ENCODE measurements at regions of chr6 and their contacts with region 1.

Region 1: DNA sequence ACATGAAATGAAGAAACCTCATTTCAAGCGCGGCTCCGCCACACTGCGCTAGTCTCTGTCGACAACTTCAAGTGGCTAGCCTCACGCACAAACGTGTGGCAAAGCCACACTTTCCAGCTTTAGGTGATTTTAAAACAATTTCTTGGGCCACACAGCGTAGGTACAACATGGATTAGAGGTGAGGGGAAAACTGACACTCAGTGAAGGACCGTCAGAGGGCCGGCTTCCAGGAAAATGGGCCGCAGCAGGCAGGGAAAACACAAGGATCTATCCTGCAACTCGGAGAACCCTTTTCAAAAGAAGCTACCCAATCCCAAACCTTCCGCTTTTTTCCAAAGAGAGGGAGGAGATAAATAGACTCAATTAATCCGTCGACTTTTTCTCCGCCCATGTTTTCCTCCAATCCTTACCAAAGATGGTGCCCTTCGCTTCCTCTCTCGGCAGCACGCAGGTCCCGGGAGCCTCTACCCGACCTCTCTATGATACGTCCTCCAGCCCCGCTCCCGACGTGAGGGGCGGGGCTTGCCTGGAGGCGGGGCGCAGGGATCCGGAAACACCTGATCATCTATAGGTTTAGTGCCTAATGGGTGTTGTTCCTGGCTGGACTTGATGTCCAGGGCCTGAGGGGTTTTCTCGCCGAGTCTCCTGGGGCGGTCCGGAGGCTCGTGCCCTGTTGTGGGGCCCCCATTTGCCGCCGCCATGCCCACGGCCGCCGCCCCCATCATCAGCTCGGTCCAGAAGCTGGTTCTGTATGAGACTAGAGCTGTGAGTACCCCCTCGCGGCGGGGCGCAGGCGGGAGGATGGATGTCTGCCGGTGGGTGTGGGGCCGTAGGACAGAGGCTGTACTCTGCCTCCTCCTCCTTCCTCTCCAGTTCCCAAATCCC is at the starts of genes AK9 and FIG4:
- DNase-seq: peak; percentile 90 to 93
- ATAC-seq: peak; percentile 99 to 100 (median 100)
- H3K4me3 ChIP-seq: peak within 1 kb of the TSS; percentile 64 to 87 (median 78)
- H3K27ac ChIP-seq: peak within 1 kb of the TSS; percentile 34 to 93 (median 84)
- H3K4me1 ChIP-seq: peaks cover 0 to 28% (median 17%) of the 10 kb centered on the region in 9 donors
- H3K27me3 ChIP-seq: no peaks in the 10 kb centered on the region
- CTCF ChIP-seq: peak in 6 of 9 donors; percentile 16 to 53 (median 34)
- total RNA-seq, gene AK9: 6.8 to 17.0 (median 10.9) TPM
- total RNA-seq, gene FIG4: 7.6 to 13.1 (median 9.3) TPM

Region 2: DNA sequence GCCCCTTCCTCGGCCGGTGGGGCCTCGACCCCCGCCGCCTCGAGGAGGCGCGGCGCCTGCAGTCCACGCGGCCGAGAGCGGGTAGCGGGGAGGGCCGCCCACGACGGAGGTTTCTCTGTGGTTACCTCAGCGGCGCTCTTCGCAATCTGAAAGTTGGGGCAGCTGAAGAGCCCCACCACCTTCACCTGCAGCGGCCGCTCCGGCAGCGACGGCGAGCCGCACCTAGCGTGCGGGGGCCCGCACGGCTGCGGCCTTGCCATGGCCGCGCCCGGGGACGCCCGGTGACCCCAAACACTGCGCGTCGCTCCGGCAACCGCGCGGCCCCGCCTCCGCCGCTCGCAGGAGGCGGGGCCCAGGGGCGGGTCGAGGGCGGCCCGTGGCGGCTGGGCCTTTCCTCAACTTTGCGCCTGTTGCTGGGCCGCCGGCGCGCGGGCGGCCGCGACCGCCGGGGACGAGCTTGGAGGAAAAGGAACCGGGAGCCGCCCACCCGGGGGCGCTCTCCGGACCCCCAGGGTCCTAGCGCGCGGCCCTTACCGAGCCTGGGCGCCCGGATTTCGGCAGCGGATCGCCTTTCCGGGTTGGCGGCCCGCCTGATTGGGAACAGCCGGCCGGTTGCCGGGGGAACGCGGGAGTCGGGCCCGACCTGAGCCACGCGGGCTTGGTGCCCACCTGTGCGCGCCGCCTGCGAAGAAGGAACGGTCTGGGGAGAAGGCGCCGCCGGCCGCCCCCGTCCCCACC is 250.5 kb before region 1 on chr6 and contains the starts of genes PPIL6 and SMPD2:
- intact Hi-C with region 1: loop called in 1 of 10 experiments (anchors 5 kb)
- DNase-seq: peak; percentile 90 to 92
- ATAC-seq: peak; percentile 90 to 97 (median 95)
- H3K4me3 ChIP-seq: peak within 1 kb of the TSS; percentile 65 to 97 (median 88)
- H3K27ac ChIP-seq: peak within 1 kb of the TSS; percentile 10 to 94 (median 86)
- H3K4me1 ChIP-seq: peaks cover 9 to 27% (median 15%) of the 10 kb centered on the region in 9 donors
- H3K27me3 ChIP-seq: no peaks in the 10 kb centered on the region
- CTCF ChIP-seq: peak; percentile 8 to 67 (median 44)
- total RNA-seq, gene PPIL6: 1.4 to 5.2 (median 3.0) TPM
- total RNA-seq, gene SMPD2: 2.1 to 6.4 (median 3.8) TPM

Region 3: GRCh38 chr6:109513571-109514071 is 177.4 kb before region 1 on chr6:
- intact Hi-C with region 1: loop called in 1 of 10 experiments (anchors 10 kb)
- DNase-seq: no peak
- ATAC-seq: peak in 6 of 8 donors; percentile 20 to 73 (median 53)
- H3K4me3 ChIP-seq: no peak overlapping the region
- H3K27ac ChIP-seq: peak overlapping the region in 3 of 10 donors; percentile 6 to 32 (median 21)
- H3K4me1 ChIP-seq: peaks cover 0 to 25% (median 4%) of the 10 kb centered on the region in 9 donors
- H3K27me3 ChIP-seq: no peaks in the 10 kb centered on the region
- CTCF ChIP-seq: no peak

Region 4: GRCh38 chr6:109736273-109737025 is 45.5 kb after region 1 on chr6:
- intact Hi-C with region 1: no loop called
- DNase-seq: no peak
- ATAC-seq: no peak
- H3K4me3 ChIP-seq: no peak overlapping the region
- H3K27ac ChIP-seq: no peak overlapping the region
- H3K4me1 ChIP-seq: peaks cover 0 to 4% (median 0%) of the 10 kb centered on the region in 9 donors
- H3K27me3 ChIP-seq: no peaks in the 10 kb centered on the region
- CTCF ChIP-seq: no peak